B cell (primary cell): ENCODE measurements at regions of chr2 and their contacts with region 1.

Region 1: GRCh38 chr2:64551851-64552250 is 27.7 kb downstream of the AFTPH start:
- DNase-seq: no peak
- ATAC-seq: no peak
- H3K4me3 ChIP-seq: no peak overlapping the region
- H3K4me3 Mint-ChIP-seq: no peak overlapping the region
- H3K27ac ChIP-seq: no peak overlapping the region
- H3K27ac Mint-ChIP-seq: no peak overlapping the region
- H3K4me1 ChIP-seq: peaks cover 3 to 5% of the 10 kb centered on the region in 2 donors
- H3K4me1 Mint-ChIP-seq: peaks cover 37% of the 10 kb centered on the region
- H3K27me3 ChIP-seq: no peaks in the 10 kb centered on the region
- H3K27me3 Mint-ChIP-seq: no peaks in the 10 kb centered on the region
- CTCF ChIP-seq: no peak

Region 2: GRCh38 chr2:63736354-63736753 is 815.5 kb before region 1 on chr2:
- CTCF ChIA-PET with region 1: no interaction called
- POLR2A ChIA-PET with region 1: no interaction called
- intact Hi-C with region 1: no loop called
- DNase-seq: no peak
- ATAC-seq: no peak
- H3K4me3 ChIP-seq: no peak overlapping the region
- H3K4me3 Mint-ChIP-seq: no peak overlapping the region
- H3K27ac ChIP-seq: no peak overlapping the region
- H3K27ac Mint-ChIP-seq: no peak overlapping the region
- H3K4me1 ChIP-seq: no peaks in the 10 kb centered on the region
- H3K4me1 Mint-ChIP-seq: no peaks in the 10 kb centered on the region
- H3K27me3 ChIP-seq: no peaks in the 10 kb centered on the region
- H3K27me3 Mint-ChIP-seq: no peaks in the 10 kb centered on the region
- CTCF ChIP-seq: no peak

Region 3: DNA sequence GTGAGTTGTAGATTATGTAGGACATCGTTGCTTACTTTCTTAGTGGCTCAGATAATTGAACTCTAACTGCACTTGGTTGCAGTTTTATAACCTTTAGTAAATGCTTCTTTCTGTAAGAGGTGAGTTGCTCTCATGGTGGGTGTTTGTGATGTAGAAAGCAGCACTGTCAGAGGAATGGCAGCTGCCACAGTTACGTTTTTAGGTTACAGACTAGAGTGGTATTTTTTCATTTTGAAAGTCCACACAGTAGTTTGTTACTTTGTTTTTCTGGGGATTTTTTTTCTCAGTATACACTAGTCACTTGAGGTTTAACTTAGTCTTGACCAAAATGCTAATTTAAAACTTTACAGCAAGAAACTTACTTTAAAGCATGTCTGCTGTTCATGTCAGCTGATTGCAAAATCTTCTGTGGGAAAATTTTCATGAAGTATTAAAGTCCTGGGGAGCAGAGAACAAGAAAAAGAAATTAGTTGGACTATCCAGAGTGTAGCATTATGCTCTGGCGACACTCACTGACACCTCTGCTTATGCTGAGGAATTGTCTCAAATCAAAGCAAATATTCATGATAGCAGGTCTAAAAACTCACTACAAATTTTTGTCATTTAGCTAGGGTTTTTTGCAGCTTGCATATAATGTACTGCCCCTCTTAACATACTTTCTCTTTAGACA is 13.0 kb before region 1 on chr2:
- CTCF ChIA-PET with region 1: no interaction called
- POLR2A ChIA-PET with region 1: no interaction called
- intact Hi-C with region 1: loop called (anchors 2 kb)
- DNase-seq: no peak
- ATAC-seq: no peak
- H3K4me3 ChIP-seq: no peak overlapping the region
- H3K4me3 Mint-ChIP-seq: no peak overlapping the region
- H3K27ac ChIP-seq: no peak overlapping the region
- H3K27ac Mint-ChIP-seq: no peak overlapping the region
- H3K4me1 ChIP-seq: peaks cover 16 to 27% of the 10 kb centered on the region in 2 donors
- H3K4me1 Mint-ChIP-seq: peaks cover 69% of the 10 kb centered on the region
- H3K27me3 ChIP-seq: no peaks in the 10 kb centered on the region
- H3K27me3 Mint-ChIP-seq: no peaks in the 10 kb centered on the region
- CTCF ChIP-seq: no peak